IMR-90 (cell line): ENCODE measurements at regions of chr13 and their contacts with region 1.

Region 1: DNA sequence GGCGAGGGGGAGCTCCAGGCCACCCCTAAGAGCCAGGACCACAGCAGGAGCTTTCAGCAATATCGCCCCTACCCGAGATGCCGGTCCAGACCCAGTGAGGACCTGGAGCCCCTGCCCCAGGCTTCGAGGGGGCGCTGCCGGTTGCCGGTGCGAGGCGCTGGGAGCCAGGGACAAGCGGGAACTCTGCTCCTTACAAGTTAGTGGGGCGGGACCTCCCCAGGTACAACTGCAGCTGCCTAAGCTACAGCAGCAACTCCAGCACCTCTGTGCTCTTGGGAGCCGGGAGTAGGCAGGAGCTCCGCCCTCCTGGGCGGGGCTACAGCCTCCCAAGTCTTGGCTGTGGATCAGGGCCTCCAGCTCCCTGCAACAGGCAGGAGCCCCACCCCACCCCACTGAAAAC is 15.2 kb upstream of the TSC22D1 start:
- DNase-seq: no peak
- ATAC-seq: no peak
- H3K4me3 ChIP-seq: no peak overlapping the region
- H3K27ac ChIP-seq: no peak overlapping the region
- H3K4me1 ChIP-seq: peaks cover 3% of the 10 kb centered on the region; the same call in 1 of the 2 replicates
- H3K27me3 ChIP-seq: no peaks in the 10 kb centered on the region
- CTCF ChIP-seq: no peak
- POLR2A ChIP-seq: no peak
- RAD21 ChIP-seq: no peak

Region 2: GRCh38 chr13:45068036-45069001 is 477.0 kb after region 1 on chr13:
- CTCF ChIA-PET with region 1: no interaction called
- POLR2A ChIA-PET with region 1: interaction called, 14 read pairs
- dilution Hi-C with region 1: no loop called
- in situ Hi-C with region 1: no loop called
- intact Hi-C with region 1: no loop called
- DNase-seq: no peak
- ATAC-seq: no peak
- H3K4me3 ChIP-seq: no peak overlapping the region
- H3K27ac ChIP-seq: no peak overlapping the region
- H3K4me1 ChIP-seq: no peaks in the 10 kb centered on the region
- H3K27me3 ChIP-seq: peaks cover 3% of the 10 kb centered on the region
- CTCF ChIP-seq: no peak
- POLR2A ChIP-seq: no peak
- RAD21 ChIP-seq: no peak